ENCODE measurements at regions of chr17 and their contacts with region 1.

Region 1: DNA sequence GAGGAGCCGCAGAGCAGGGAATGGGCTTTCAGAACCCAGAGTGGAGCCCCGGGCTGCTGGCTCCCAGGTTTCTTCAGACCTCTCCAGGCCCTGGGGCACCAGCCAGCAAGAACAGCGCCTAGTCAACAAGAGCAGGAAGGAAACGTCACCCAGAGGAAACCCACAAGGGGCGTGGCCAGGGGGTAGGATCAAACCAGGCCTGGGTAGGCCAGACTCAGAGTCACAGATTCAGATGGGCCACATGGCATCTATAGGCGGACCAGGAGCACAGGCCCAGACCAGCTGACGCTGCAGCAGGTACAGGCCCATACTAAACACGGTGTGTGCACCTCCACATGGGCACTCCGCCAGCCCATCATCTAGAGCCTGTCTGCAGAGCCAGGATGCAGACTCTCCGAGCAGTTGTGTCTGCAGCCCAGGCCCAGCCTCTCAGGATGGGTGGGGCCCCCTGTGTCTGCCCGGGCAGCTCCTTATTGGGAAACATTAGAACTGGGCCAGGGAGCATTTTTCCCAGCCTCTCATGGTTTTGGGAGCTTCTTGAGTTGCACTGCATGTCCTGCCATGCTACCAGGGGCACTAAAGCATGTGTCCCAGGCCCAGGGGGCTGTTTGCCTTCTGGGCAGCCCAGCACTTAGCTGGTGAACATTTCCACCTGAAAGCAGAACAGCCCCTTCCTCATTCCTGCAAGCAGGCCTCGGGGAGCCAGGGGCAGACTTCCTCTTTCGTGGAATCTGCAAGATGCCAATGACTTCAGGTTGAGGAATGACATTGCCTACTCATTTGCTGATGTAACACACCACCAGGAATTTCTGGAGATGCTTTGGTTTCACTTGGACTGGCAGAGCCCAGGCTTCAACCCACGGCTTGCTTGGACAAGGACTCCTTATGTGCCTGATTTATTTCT is at the start of gene NLRP1:
- DNase-seq: peak; percentile 95
- ATAC-seq: peak; percentile 96
- total RNA-seq, gene NLRP1: 9.0 TPM

Region 2: GRCh38 chr17:5644065-5644464 is 59.4 kb after region 1 on chr17:
- intact Hi-C with region 1: no loop called
- DNase-seq: no peak
- ATAC-seq: no peak

Region 3: GRCh38 chr17:5706577-5707216 is 122.1 kb after region 1 on chr17:
- intact Hi-C with region 1: loop called (anchors 5 kb)
- DNase-seq: no peak
- ATAC-seq: no peak

Region 4: DNA sequence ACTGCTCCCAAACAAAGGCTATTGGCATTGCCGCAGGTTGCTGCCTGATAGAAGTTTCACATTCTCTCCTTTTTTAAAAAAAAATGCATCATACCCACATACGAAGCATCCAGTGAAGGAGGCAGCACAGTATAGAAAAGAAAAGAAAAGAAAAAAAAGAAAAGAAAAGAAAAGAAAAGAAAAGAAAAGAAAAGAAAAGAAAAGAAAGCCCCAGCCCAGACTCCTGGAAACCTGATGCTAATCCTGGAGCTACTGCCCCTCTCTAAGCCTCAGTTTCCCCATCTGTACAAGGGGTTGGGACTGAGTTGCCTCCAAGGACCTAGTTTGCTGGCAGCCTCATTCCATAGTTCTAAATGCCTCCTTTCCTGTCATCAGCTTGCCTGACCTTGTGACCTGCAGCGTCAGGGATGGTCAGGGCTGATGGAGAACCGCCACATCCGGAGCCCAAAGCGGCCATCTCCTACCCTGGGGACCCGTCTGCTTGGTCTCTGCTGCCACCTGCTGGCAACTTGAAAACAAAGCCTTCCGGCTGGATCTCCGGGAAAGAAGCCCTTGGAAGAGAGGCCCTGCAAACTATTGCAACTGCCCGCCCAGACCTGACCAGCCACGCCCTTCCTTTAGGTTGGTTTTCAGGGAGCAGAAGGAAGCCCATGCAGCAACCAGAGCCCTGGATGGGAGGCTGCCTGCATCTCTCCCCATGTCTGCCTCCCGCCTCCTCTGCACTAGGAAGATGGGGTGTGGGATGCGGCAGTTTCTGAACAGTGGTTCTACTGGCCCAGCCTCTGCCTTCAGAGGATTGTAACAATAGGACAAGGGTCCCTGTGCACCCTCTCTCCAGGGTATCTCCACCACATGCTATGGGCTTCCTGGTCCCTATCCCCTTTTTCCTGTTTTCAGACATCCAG is 837.3 kb after region 1 on chr17:
- intact Hi-C with region 1: loop called (anchors 1 kb)
- DNase-seq: peak; percentile 76
- ATAC-seq: peak; percentile 73

Region 5: GRCh38 chr17:6435968-6436367 is 851.3 kb after region 1 on chr17:
- intact Hi-C with region 1: loop called (anchors 5 kb)
- DNase-seq: no peak
- ATAC-seq: peak; percentile 76

Measured in Right ventricle myocardium inferior (tissue), 1 donor.